PC-9 (cell line): ENCODE measurements at regions of chr18 and their contacts with region 1.

Region 1: GRCh38 chr18:21444465-21445023 is 156.0 kb downstream of the ESCO1 start:
- DNase-seq: peak; percentile 9 to 40
- H3K4me3 ChIP-seq: no peak overlapping the region
- H3K27ac ChIP-seq: no peak overlapping the region
- H3K4me1 ChIP-seq: peaks cover 29% of the 10 kb centered on the region
- H3K27me3 ChIP-seq: no peaks in the 10 kb centered on the region
- CTCF ChIP-seq: peak; percentile 75

Region 2: DNA sequence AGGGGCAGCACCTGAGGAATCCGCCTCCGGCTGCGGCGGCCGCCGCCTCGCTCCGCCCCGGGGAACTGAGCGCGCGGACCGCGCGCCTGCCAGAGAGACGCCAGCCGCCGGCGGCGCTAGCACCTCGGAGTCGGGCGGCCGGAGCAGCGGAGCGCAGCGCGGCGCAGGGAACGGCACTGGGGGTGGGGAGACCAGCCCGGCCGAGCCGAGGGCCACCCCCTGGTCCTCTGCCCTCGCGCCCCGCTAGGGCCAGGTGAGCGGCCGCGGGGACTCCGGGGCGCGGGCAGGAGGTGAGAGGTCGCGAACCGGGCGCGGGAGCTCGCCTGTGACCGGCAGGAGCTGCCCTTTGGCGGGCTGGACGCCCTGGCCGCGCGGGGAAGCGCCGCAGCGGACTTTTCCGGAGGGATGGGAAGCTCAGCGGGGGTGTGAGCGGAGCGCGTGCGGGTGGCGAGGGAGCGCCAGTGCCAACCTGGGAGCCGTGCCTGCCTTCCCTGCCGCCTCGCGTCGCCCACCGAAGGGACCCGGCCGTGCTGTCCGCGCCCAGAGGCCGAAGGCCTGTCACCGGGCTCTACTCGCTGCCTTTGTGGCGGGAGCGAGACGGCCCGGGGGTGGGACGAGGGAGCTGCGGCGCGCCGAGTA is 202.3 kb before region 1 on chr18 and contains the start of gene GREB1L:
- CTCF ChIA-PET with region 1: no interaction called
- POLR2A ChIA-PET with region 1: no interaction called
- intact Hi-C with region 1: loop called (anchors 1 kb)
- DNase-seq: peak; percentile 38 to 73
- H3K4me3 ChIP-seq: peak within 1 kb of the TSS; percentile 62
- H3K27ac ChIP-seq: no peak within 1 kb of the TSS
- H3K4me1 ChIP-seq: 0 out of 2 replicates have a peak, but pooled peaks cover 7% of the 10 kb centered on the region
- H3K27me3 ChIP-seq: no peaks in the 10 kb centered on the region
- CTCF ChIP-seq: no peak; the same call in 1 of the 2 replicates
- total RNA-seq, gene GREB1L: 3.6 and 6.0 TPM in 2 replicates